Left cardiac atrium (tissue), 4 donors: ENCODE measurements at regions of chr10 and their contacts with region 1.

Region 1: DNA sequence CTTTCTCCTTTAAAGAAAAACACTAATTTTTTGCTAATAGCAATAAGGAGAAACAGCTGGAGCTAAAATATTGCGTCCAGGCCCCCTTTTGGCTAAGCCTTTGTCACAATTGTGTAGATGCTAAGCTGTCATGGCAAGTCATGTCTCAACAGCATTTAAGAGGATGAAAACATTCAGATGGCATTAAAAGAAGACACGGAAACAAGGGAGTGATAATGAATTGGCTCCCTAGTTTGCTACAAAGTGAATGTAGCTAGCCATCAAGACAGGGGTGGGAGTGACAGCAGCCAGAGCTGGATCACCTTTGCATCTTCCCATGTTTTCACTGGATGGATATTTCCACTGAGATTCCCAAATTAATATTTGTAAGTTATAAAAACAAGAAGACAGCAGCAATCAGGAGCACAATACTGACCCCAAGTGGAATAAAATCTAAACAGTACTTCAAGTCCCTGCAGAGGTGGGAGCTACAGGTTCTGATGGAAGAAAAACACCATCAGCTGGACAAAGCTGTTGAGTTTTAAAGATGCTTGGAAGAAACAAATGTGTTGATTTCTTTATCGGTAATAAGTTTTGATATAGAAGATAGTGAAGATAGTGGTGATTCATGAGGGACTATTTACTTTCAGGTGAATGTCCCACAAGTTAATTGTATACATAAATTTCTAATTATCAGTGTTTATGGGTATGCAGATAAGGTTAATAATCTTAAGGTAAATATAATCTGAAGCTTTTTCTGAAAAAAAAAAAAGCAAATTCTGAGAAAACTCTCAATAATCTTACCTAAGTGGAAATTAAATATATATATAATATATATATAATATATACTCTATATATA is 129.4 kb downstream of the SLC16A9 start:
- DNase-seq: no peak
- ATAC-seq: no peak

Region 2: DNA sequence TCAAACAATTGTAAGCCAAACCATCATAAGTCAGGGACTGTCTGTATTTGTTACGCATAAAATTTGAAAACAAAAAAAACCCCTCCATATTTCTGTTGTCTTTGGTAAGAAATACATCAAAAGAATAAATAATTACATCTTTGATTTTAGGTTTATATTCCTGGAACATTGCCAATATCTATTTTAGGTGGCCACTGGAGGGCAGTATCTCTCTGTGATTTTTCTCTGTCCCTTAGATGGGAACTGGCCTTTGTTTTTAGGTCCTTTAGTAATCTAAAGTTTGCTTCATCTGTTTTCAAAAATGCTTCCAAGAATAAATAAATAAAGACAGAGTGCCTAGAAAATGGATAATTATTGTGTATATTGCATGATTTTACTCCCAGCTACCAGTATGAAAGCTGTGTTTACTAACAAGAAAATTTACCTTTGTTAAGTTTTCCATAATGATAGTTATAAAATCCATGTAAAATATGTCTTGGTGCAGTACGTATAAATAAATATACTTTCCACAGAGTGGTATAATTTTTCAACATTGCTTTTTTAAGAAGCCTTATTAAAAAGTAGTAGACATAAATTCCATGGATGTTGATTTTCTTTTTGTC is 339.6 kb before region 1 on chr10:
- intact Hi-C with region 1: loop called in 1 of 2 experiments (anchors 2 kb)
- DNase-seq: no peak
- ATAC-seq: no peak

Region 3: GRCh38 chr10:59517996-59518395 is 62.2 kb before region 1 on chr10:
- intact Hi-C with region 1: no loop called
- DNase-seq: no peak
- ATAC-seq: no peak